ENCODE measurements at regions of chr2 and their contacts with region 1.

Region 1: DNA sequence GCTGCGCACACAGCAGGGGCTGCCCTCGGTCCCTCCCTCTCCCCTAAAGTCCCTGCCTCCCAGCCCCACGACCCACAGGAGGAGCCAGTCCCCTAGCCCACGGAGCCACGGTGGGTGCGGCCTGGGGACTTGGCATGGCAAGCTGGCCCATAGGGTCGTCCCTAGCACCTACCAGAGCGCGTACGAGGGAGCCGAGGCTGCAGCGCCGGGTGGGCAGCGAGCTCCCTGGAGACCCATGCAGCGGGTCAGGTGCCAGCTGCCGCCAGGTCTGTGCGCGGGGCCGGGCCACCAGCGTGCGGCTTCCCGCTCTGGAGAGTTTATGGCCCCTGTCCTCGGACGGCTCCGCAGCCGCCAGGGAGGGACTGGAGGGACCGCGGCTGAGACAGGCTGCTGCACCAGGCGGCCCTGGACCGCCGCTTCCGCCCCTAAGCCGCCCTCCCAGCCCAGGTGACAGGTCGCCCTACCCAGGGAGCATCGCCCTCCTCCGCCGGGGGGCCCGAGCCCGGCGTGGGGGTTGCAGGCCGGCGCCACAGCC is 273.6 kb downstream of the CCDC74A start:
- DNase-seq: no peak
- H3K4me3 ChIP-seq: peak overlapping the region; percentile 40
- H3K27ac ChIP-seq: no peak overlapping the region
- H3K4me1 ChIP-seq: peaks cover 4% of the 10 kb centered on the region
- CTCF ChIP-seq: no peak

Region 2: GRCh38 chr2:131154071-131154531 is 647.2 kb before region 1 on chr2:
- CTCF ChIA-PET with region 1: no interaction called
- POLR2A ChIA-PET with region 1: no interaction called
- intact Hi-C with region 1: loop called (anchors 5 kb)
- DNase-seq: peak; percentile 83
- H3K4me3 ChIP-seq: no peak overlapping the region
- H3K27ac ChIP-seq: no peak overlapping the region
- H3K4me1 ChIP-seq: peaks cover 11% of the 10 kb centered on the region
- CTCF ChIP-seq: peak; percentile 93

Region 3: DNA sequence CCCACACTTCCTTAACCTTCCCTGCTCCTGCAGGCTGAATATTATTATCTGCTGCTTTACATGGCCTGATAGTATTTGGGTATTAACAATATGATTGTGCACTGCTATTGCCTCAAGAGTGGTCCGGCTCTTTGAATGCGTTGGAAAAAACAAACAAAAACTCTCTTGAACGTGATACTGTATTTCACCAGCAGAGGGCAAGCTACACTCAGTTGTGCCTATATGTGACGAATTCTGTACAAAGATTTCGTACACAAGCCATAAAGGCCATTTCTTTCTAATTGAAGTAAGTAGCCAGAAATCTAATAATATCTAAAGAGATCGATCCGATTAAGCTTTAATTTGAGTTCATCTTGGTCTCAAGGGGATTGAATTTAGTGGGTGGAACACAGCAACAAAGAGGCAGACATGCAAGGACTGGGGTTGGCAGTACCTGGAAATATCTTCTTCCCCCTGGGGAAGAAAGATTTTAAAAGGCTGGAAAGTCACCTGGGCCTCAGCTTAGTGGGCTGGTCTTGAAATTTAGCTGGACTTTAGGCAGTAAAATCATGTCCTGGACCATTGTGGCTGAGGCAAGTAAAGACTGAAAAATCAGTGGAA is 388.0 kb before region 1 on chr2:
- CTCF ChIA-PET with region 1: no interaction called
- POLR2A ChIA-PET with region 1: no interaction called
- intact Hi-C with region 1: loop called (anchors 10 kb)
- DNase-seq: peak; percentile 74
- H3K4me3 ChIP-seq: no peak overlapping the region
- H3K27ac ChIP-seq: no peak overlapping the region
- H3K4me1 ChIP-seq: no peaks in the 10 kb centered on the region
- CTCF ChIP-seq: peak; percentile 97